A673 (cell line): ENCODE measurements at regions of chr4 and their contacts with region 1.

Region 1: DNA sequence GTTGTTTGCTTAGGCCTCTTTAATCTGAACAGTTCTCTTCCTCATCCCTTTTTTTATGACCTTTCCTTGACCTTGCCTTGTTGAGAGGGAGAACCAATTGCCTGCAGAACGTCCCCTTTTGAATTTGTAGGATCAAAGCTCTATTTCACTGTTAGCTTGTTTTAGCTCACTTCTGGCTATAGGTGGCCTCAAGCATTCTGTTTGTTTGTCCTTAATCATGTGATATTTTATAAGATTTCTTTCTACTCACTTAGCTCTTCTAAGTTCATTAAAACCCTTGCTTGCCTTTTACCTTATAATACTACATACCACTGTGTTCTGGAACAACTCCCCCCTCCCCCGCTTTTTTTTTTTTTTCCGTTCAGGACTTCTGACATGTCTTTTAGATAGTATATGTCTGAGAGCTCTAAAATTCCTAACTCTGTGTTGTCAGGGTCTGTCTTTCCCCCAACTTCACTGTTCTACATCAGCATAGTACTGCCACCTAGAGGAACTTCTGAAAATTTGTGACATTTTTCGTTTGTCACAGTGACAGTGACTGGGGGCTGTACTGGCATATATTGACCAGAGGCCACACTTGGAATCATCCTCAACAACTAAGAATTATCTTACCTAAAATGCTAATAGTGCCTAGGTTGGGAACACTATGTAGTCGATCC is 128.5 kb downstream of the LARP7 start:
- DNase-seq: peak; percentile 79
- H3K4me3 ChIP-seq: no peak overlapping the region
- H3K27ac ChIP-seq: no peak overlapping the region
- H3K4me1 ChIP-seq: no peaks in the 10 kb centered on the region
- H3K27me3 ChIP-seq: no peaks in the 10 kb centered on the region
- CTCF ChIP-seq: peak; percentile 74

Region 2: DNA sequence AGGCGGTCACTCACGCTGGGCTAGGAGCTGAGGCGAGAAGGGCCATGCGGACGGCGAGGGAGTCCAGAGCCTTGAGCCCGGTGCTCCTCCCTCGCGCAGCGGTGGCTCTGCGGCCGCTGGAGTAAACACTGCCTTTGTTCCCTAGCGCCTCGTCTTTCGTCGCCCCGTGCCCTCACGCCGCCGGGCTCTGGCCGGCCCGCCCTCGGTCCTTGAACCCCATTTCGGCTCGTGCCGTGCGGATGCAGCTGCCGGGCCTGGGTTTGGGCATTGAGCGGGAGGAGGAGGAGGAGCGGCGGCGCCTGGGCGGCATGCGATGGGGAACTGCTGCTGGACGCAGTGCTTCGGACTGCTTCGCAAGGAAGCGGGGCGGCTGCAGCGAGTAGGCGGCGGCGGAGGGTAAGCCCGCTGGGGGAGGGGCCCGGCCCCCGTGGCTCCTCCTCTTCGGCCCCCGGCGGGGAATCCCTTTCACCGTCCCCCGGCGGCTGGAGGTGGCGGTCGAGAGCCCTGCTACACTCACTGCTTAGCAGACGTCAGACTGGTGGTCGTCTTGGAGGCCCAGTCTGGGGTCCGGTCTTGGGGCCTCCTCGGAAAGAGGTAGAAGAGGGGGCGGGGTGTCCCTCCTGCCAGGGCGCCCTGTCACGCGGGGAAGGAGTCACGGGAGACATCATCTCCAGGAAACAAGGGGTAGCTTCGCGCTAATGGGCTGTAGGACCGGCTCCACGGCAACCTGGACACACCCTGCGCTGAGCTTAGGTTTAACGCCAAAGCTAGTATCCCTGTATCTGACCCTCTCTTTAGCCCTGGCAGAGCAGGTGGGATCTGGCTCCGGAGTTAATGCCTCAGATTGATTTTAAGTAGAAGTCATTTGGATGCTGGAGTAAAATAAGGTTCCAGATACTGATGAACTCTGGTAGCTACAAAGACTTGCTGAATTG is 533.4 kb before region 1 on chr4 and contains the start of gene AP1AR:
- CTCF ChIA-PET with region 1: no interaction called
- POLR2A ChIA-PET with region 1: no interaction called
- intact Hi-C with region 1: loop called (anchors 10 kb)
- DNase-seq: peak; percentile 91
- H3K4me3 ChIP-seq: peak within 1 kb of the TSS; percentile 96
- H3K27ac ChIP-seq: peak within 1 kb of the TSS; percentile 98
- H3K4me1 ChIP-seq: peaks cover 11% of the 10 kb centered on the region
- H3K27me3 ChIP-seq: no peaks in the 10 kb centered on the region
- CTCF ChIP-seq: peak; percentile 44; the same call in 1 of the 2 replicates
- total RNA-seq, gene AP1AR: 24.9 and 30.0 TPM in 2 replicates

Region 3: DNA sequence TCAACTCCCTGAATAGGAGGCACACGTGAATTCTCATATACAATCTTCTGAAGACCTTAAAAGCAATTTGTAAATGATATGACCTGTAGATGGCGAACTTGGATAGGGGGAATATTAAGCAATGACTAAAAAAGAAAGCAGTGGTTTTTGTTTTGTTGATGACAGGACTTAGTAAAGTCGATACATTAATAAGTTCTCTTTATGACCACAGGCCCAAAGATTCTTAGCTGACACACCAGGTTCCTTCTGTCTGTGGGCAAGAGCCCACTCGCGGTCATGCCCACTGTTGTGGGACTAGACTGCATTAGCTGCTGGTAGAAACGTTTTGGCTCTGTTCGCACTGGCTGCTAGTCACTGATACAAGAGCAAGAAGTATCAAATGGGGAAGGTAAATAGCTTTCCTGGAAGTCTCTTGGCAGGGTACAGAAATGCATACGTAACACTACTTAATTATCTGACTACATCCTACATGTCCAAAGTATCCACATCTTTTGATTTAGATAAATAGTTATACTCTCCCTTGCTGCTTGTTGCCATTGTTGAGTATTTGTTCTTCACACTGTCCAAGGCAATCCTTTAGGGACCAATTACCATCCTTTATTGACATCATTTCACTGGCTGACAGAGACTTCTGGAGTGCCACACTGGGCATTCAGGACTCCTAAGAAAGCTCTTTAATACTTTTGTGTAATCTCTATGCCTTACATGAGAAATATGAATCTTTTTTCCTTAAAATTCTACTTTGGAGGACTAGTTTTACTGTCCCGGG is 437.3 kb before region 1 on chr4:
- CTCF ChIA-PET with region 1: no interaction called
- POLR2A ChIA-PET with region 1: no interaction called
- intact Hi-C with region 1: loop called (anchors 5 kb)
- DNase-seq: peak; percentile 73
- H3K4me3 ChIP-seq: no peak overlapping the region
- H3K27ac ChIP-seq: no peak overlapping the region
- H3K4me1 ChIP-seq: no peaks in the 10 kb centered on the region
- H3K27me3 ChIP-seq: no peaks in the 10 kb centered on the region
- CTCF ChIP-seq: peak; percentile 61

Region 4: DNA sequence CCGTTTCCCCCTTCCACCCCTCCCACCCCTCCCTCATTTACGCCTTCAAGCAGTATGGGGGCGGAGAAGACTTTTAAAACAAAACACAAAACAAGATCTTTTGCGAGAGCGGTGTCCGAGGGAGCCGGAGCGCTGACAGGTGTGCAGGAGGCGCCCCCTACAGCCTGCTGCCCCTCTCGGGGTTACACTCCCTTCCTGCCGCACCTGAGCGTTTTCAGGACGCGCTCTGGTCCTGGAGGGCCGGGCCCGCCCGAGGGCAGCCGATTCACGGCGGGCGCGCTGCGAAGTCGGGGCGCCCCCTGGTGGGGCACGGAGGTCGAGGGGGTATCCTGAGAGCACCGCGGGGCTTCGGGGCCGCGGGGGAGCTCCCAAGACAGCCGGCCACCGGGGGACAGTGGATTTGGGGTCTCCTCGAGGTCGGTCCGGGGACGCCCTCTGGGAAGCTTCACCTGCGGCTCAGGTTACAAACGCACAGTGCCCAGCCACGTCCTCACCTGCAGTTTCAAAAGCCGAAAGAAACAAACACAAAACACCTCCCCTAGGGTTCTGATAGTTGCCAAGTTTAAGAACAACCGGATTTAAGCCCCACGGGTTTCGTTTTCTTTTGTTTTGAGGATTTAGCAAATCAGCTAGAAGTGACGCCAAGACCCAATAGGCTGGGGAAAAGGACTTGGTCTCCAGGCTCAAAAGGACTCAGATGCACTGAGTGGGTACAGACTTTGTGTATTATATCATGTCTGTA is 241.5 kb before region 1 on chr4:
- CTCF ChIA-PET with region 1: interaction called, 3 read pairs
- POLR2A ChIA-PET with region 1: no interaction called
- intact Hi-C with region 1: loop called (anchors 10 kb)
- DNase-seq: peak; percentile 75
- H3K4me3 ChIP-seq: peak overlapping the region; percentile 50
- H3K27ac ChIP-seq: no peak overlapping the region
- H3K4me1 ChIP-seq: peaks cover 6% of the 10 kb centered on the region
- H3K27me3 ChIP-seq: peaks cover 39% of the 10 kb centered on the region
- CTCF ChIP-seq: peak; percentile 93

Region 5: DNA sequence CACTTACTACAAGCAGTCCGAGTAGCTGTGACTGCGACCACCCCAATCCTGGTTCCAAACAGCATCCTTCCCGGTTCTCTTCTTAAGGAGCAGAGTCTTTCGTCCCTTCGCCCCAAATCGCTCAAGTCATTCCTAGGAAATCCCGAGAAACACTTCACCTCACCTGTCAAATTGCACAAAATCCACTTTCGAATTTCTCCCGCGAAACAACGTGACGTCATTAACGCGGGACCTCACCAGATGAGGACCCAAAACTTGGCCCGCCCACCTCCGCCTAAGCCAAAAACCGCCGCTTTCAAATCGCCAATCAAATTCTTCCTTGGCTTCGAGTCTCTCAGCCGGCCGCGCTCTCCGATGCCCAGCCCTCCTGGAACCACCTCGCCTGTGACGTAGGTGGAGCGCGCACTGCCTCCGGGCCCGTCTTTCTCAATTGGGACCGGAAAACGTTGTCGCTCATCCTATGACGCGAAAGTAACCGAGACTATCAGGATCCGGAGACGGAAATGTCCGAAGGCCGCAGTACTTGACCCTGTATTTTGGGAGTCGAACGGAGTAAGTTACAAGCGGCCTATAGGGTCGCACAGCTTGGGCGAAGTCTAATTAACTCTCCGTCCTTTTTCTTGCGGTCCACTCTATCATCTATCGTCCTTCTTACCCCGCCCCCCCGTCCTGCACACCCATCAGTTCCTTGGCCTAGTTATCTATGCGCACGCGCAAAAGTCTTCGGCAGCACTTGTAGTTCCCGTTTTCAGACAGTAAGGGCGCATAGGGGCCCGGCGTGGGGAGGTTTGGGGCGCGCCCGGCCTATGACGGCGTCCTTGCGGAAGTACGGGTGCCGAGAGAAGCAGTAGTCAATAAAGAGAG is 128.5 kb before region 1 on chr4 and contains the starts of genes LARP7 and ZGRF1:
- CTCF ChIA-PET with region 1: interaction called, 7 read pairs
- POLR2A ChIA-PET with region 1: no interaction called
- intact Hi-C with region 1: loop called (anchors 1 kb)
- DNase-seq: peak; percentile 99
- H3K4me3 ChIP-seq: peak within 1 kb of the TSS; percentile 71
- H3K27ac ChIP-seq: peak within 1 kb of the TSS; percentile 93
- H3K4me1 ChIP-seq: peaks cover 9% of the 10 kb centered on the region
- H3K27me3 ChIP-seq: no peaks in the 10 kb centered on the region
- CTCF ChIP-seq: peak; percentile 95
- total RNA-seq, gene LARP7: 40.6 and 40.8 TPM in 2 replicates
- total RNA-seq, gene ZGRF1: 31.4 and 37.5 TPM in 2 replicates

Region 6: DNA sequence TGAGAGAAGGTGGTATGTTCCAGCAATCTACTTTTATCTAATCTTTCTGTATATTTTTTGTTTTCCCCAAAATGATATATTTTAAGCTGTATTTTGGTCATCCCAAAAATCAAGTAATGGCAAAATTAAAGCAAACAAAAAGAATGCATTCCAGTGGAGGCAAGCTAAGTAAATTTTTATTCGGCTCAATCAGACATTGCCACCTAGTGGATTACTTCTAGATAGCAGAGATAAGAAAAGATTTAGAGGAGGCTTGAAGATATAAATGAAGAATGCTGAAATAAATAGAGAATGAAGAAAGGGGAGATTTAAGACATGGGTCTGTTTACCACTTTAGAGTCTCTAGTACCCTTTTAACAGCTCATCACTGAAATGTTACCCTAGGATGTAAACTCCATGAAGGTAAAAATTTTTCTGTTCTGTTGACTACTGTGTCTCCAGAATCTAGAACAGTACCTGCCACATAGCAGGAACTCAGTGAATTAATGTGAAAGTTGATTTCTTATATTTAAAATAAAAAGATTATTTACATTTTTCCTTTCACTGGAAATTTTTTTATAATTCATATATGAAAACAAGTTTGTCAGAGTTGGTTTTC is 173.1 kb after region 1 on chr4:
- CTCF ChIA-PET with region 1: interaction called, 26 read pairs
- POLR2A ChIA-PET with region 1: no interaction called
- intact Hi-C with region 1: loop called (anchors 1 kb)
- DNase-seq: peak; percentile 75
- H3K4me3 ChIP-seq: no peak overlapping the region
- H3K27ac ChIP-seq: no peak overlapping the region
- H3K4me1 ChIP-seq: peaks cover 12% of the 10 kb centered on the region
- H3K27me3 ChIP-seq: no peaks in the 10 kb centered on the region
- CTCF ChIP-seq: peak; percentile 84

Region 7: GRCh38 chr4:113094802-113095201 is 329.4 kb after region 1 on chr4:
- CTCF ChIA-PET with region 1: interaction called, 8 read pairs
- POLR2A ChIA-PET with region 1: no interaction called
- intact Hi-C with region 1: loop called (anchors 5 kb)
- DNase-seq: peak; percentile 27
- H3K4me3 ChIP-seq: no peak overlapping the region
- H3K27ac ChIP-seq: no peak overlapping the region
- H3K4me1 ChIP-seq: no peaks in the 10 kb centered on the region
- H3K27me3 ChIP-seq: no peaks in the 10 kb centered on the region
- CTCF ChIP-seq: peak; percentile 81